Aorta (tissue), 5 donors: ENCODE measurements at regions of chr6 and their contacts with region 1.

Region 1: DNA sequence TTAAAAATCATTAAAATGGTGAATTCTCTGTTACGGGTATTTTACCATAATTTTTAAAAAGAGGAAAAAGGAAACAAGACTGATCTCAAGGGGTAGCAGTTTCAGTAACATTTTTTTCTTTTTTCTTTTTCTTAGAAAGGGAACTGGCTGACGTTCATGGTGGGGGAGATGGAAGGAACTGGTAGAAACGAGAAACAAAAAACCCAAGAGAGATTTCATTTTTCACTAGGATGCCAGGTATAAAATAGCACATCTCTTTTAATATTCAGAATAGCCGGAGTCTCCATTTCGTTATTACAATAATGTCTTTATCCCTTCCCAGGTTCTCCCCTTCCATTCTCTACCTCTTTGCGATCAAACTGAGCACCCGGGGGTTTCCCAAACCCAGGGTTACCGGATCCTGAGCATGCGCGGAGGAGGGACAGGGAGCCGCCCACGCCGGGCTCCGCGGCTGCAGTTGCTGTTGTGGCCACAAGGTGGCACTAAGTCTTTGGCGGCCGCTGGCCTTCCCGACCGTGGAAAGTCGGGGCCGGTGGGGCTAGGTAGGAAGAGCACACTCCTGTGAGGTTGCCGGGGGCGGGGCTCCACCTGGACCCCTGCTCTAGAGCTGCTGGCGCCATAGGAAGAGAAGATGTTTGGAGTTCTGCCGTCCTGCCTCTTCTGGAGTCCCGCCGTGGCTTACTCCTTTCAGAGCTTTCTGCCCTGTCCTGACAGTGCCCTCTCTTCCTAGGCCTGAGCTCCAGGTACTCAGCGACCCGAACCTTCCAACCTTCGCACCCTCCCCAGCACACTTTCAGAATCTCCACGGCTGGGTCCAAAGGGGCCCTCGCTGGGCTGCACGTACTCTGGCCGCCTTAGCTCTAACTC is 146.8 kb downstream of the SH3BGRL2 start:
- DNase-seq: peak; percentile 88 to 94
- ATAC-seq: peak; percentile 91
- H3K4me3 ChIP-seq: no peak overlapping the region
- H3K27ac ChIP-seq: no peak overlapping the region
- H3K4me1 ChIP-seq: no peaks in the 10 kb centered on the region
- H3K27me3 ChIP-seq: no peaks in the 10 kb centered on the region

Region 2: GRCh38 chr6:79694625-79695343 is 83.2 kb before region 1 on chr6:
- intact Hi-C with region 1: no loop called
- DNase-seq: no peak
- ATAC-seq: peak; percentile 57
- H3K4me3 ChIP-seq: no peak overlapping the region
- H3K27ac ChIP-seq: no peak overlapping the region
- H3K4me1 ChIP-seq: no peaks in the 10 kb centered on the region
- H3K27me3 ChIP-seq: no peaks in the 10 kb centered on the region

Region 3: DNA sequence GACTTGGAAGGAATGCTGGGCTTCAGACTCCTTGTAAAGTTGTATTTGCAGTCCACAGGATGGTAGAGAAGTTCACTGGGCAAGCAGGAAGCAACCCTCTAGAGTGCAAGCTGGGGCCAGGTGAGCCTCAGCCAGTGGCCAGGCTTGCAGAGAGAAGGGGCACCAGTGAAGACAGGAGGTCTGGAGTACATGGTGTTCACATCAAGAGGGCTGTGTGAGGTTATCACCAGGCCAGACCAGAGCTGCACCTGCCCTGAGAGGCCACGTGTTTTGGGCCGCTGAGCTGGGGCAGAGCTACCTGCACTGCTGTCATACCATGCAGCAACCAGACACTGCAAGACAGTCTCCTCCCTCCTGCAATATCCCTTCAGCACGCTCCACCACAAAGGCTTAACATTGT is 67.8 kb before region 1 on chr6:
- intact Hi-C with region 1: no loop called
- DNase-seq: no peak
- ATAC-seq: peak; percentile 35
- H3K4me3 ChIP-seq: no peak overlapping the region
- H3K27ac ChIP-seq: no peak overlapping the region
- H3K4me1 ChIP-seq: no peaks in the 10 kb centered on the region
- H3K27me3 ChIP-seq: no peaks in the 10 kb centered on the region

Region 4: GRCh38 chr6:79813854-79814709 is 36.1 kb after region 1 on chr6:
- intact Hi-C with region 1: loop called in 1 of 2 experiments (anchors 5 kb)
- DNase-seq: peak; percentile 77 to 81
- ATAC-seq: peak; percentile 87
- H3K4me3 ChIP-seq: no peak overlapping the region
- H3K27ac ChIP-seq: no peak overlapping the region
- H3K4me1 ChIP-seq: no peaks in the 10 kb centered on the region
- H3K27me3 ChIP-seq: no peaks in the 10 kb centered on the region

Region 5: GRCh38 chr6:79869600-79870084 is 91.7 kb after region 1 on chr6:
- intact Hi-C with region 1: loop called in 1 of 2 experiments (anchors 5 kb)
- DNase-seq: peak; percentile 85 to 91
- ATAC-seq: peak; percentile 96
- H3K4me3 ChIP-seq: no peak overlapping the region
- H3K27ac ChIP-seq: no peak overlapping the region
- H3K4me1 ChIP-seq: no peaks in the 10 kb centered on the region
- H3K27me3 ChIP-seq: peaks cover 0 to under 1% of the 10 kb centered on the region in 2 donors